Activated T-helper 2 cell treated with anti-CD3 and anti-CD28 coated beads, Interferon-gamma antibody, Interleukin-2, Interleukin-4, amounts not matched to agents 10 μg/mL and 5 μg/mL and 100 μg/mL, durations not matched to agents 14 hours and 24 hours and 36 hours (primary cell): ENCODE measurements at regions of chr17 and their contacts with region 1.

Region 1: GRCh38 chr17:8189711-8190477 is at the start of gene BORCS6:
- DNase-seq: peak; percentile 95
- H3K4me3 Mint-ChIP-seq: no peak within 1 kb of the TSS
- H3K27ac Mint-ChIP-seq: peak within 1 kb of the TSS; percentile 86
- H3K4me1 Mint-ChIP-seq: peaks cover 11% of the 10 kb centered on the region
- H3K27me3 Mint-ChIP-seq: no peaks in the 10 kb centered on the region
- total RNA-seq, gene BORCS6: 7.8 and 8.0 TPM in 2 replicates

Region 2: DNA sequence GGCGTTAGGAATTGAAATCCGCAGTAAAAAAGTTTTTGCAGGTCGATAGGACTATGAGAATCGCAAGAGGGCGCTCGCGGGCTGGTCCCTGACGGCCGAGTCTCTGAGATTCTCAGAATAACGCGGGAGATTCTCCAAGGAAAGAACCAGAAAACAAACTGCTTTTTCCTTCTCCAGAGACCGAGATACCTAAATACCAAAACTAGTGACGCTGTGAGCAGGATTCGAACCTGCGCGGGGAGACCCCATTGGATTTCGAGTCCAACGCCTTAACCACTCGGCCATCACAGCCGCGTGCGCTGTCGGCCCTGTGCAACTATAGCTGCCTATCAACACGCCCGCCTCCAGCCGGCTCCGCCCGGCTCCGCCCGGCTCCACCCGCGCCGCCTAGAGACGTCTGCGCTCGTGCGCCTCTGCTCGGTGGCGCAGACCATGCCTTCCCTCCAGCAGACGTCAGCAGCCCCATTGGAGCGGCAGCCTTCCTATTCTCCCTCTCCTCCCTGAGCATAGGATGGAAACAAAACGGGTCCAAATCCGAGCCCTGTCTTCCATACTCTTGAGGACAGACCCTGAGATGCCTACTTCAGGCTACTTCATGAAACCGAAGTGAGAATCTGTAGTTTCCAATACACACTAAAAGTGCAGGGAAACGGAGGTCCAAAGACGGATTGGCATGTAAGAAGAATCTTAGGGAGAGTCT is 51.1 kb before region 1 on chr17:
- intact Hi-C with region 1: loop called (anchors 1 kb)
- DNase-seq: peak; percentile 97
- H3K4me3 Mint-ChIP-seq: no peak overlapping the region
- H3K27ac Mint-ChIP-seq: no peak overlapping the region
- H3K4me1 Mint-ChIP-seq: peaks cover 2% of the 10 kb centered on the region
- H3K27me3 Mint-ChIP-seq: peaks cover 5% of the 10 kb centered on the region

Region 3: DNA sequence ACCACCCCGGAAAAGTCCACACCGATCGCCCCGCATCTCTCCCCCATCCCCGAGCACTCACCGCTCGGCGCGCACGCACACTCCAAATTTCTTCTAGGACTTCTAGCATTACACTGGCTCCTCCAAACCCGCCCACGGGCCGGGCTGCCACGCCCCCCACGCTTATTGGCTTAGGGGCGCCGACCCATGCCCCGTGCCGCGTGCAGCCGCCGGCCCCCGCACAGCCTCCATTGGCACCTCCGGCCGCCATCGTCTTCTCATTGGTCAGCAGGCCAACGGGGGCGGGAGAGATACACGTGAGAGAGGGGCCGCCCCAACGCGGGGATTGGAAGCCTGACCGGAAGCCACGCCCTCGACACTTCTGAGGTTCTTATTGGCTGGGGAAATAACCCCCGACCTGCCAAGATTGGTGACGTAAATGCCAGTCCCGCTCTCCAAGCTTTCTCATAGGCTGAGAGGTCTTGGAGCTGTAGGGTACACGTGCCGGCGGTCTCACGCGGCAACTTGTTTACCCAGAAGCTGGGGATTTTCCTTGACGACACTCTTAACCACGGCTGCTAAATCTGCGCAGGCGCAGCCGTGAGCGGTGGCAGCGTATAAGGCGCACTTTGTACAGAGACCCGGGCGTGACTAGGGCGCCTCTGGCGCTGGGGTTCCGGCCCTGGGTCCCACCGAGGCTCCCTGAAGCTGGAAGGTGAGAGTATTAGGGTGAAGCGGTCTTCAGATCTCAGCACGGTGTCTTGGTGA is 33.5 kb before region 1 on chr17:
- intact Hi-C with region 1: loop called (anchors 1 kb)
- DNase-seq: peak; percentile 100
- H3K4me3 Mint-ChIP-seq: no peak overlapping the region
- H3K27ac Mint-ChIP-seq: no peak overlapping the region
- H3K4me1 Mint-ChIP-seq: peaks cover 49% of the 10 kb centered on the region
- H3K27me3 Mint-ChIP-seq: no peaks in the 10 kb centered on the region

Region 4: GRCh38 chr17:8204761-8205555 is 15.1 kb after region 1 on chr17:
- intact Hi-C with region 1: loop called (anchors 1 kb)
- DNase-seq: no peak
- H3K4me3 Mint-ChIP-seq: no peak overlapping the region
- H3K27ac Mint-ChIP-seq: no peak overlapping the region
- H3K4me1 Mint-ChIP-seq: peaks cover 15% of the 10 kb centered on the region
- H3K27me3 Mint-ChIP-seq: no peaks in the 10 kb centered on the region

Region 5: DNA sequence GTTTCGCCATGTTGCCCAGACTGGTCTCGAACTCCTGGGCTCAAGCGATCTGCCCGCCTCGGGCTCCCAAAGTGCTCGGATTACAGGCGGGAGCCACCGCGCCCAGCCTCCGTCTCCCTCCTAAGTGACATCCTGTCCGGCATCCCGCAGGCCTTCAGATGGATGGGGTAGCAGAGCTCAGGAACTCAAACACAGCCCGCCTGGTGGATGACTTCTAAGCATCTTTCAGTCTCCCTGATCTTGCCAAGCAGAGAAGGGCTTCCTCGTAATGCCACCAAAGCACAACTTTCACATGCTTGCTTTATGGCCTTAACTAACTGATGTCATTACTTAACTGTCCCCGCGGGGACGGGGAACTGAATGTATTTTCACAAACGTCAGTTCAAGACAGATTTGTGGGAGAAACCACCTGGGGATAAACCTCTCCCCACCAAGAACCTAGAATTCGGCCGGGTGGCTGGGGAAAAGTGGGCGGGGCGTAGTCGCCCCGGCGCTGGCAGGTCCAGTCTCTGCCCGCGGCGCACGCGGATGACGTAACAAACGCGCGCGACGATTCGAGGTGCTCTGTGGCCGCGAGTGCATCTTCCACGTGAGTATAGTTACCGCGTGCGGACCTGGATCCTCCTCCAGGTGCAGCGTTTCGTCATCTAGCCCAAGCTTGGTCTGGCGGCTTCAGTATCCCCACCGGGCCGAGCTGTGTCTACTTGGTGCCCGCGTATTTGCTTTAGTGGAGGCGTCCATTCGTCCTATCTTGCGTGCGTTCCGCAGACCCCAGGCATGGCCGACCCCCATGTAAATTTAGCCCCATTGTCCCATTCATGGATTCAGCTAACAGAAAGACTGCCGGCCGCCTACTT is 59.1 kb after region 1 on chr17 and contains the start of gene PFAS:
- intact Hi-C with region 1: loop called (anchors 1 kb)
- DNase-seq: peak; percentile 95
- H3K4me3 Mint-ChIP-seq: peak within 1 kb of the TSS; percentile 99
- H3K27ac Mint-ChIP-seq: peak within 1 kb of the TSS; percentile 100
- H3K4me1 Mint-ChIP-seq: peaks cover 30% of the 10 kb centered on the region
- H3K27me3 Mint-ChIP-seq: no peaks in the 10 kb centered on the region
- total RNA-seq, gene PFAS: 165 and 174 TPM in 2 replicates

Region 6: DNA sequence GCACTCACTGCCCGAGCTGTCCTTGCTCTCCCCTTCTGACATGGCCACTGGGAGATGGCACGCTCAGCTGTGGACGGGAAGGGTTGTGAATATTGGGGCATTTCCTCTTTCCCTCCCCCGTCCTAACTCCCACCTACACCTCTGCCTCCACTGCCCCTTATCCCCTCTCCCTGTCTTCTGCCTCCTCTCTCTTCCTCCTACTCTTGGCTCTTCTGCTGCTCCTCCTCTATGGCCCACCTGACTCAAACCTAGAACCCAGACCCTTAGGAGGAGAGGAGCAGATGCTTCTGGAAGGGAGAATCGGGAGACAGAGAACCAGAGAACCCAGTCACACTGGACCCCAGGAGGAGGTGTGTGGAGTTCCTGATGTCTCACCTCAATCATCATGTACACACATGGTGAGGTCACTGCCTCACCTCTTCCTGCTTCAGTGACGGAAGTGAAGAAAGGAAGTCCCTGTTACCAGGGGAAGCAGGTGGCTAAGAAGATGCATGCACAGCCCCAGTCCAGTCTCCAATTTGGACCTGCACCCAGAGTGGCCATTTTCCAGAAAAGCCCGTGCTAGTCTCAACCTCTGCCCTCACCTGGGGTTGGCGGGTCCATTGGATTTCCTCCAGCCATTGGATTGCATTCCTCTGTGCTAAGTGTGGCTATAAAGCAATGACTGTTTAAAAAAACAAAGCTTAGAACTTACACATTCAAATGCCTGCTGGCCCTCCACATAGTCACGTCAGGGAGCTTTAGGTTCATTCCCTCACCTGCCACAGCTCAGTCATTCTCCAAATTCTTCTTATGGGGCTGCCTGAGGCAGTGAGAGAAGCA is 203.7 kb after region 1 on chr17:
- intact Hi-C with region 1: no loop called
- DNase-seq: no peak
- H3K4me3 Mint-ChIP-seq: no peak overlapping the region
- H3K27ac Mint-ChIP-seq: peak overlapping the region; percentile 74
- H3K4me1 Mint-ChIP-seq: peaks cover 14% of the 10 kb centered on the region
- H3K27me3 Mint-ChIP-seq: peaks cover 25% of the 10 kb centered on the region